ENCODE measurements at regions of chr5 and their contacts with region 1.

Region 1: GRCh38 chr5:156201788-156202403 is 125.1 kb upstream of the SGCD start:
- DNase-seq: no peak
- H3K4me3 ChIP-seq: no peak overlapping the region
- H3K27ac ChIP-seq: no peak overlapping the region
- H3K4me1 ChIP-seq: no peaks in the 10 kb centered on the region
- H3K27me3 ChIP-seq: no peaks in the 10 kb centered on the region
- CTCF ChIP-seq: no peak
- EP300 ChIP-seq: no peak
- POLR2A ChIP-seq: no peak

Region 2: DNA sequence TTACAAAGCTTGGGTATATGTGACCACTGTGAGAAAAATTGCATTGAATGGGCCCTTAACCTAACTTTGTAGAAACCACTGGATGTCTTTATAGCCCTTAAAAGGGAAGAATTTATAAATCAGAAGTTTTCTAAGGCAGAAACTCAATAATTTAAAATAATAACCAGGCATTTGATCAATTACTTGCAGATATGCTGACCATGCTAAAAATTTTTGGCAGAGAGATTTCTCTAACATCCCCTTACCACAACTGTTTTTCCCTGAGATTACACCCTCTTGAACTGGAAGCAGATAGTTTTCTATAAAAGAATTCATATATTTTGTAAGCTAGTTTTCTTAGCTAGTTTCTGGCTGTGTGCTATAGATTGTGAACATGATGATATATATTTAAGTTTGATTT is 760.0 kb before region 1 on chr5:
- intact Hi-C with region 1: loop called in 1 of 4 experiments (anchors 10 kb)
- DNase-seq: no peak
- H3K4me3 ChIP-seq: no peak overlapping the region
- H3K27ac ChIP-seq: no peak overlapping the region
- H3K4me1 ChIP-seq: no peaks in the 10 kb centered on the region
- H3K27me3 ChIP-seq: no peaks in the 10 kb centered on the region
- CTCF ChIP-seq: no peak
- EP300 ChIP-seq: no peak
- POLR2A ChIP-seq: no peak

Region 3: DNA sequence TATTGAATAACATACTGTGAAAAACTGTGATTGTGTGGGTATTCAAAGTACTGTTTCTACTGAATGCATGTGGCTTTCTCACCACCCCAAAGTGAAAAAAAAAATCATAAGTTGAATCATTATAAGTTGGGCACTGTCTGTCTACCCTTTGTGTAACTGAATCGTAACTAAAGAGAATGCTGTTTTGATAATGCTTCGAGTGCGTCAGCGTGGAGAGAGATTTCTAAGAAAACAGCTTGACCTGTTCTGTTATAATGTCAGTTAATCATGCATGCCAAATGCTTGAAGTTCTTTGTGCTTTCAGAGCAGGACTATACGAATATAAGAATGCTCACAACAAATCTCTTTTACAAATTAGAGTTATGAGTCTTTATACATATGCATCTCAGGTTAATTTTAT is 23.8 kb before region 1 on chr5:
- intact Hi-C with region 1: no loop called
- DNase-seq: no peak
- H3K4me3 ChIP-seq: no peak overlapping the region
- H3K27ac ChIP-seq: no peak overlapping the region
- H3K4me1 ChIP-seq: no peaks in the 10 kb centered on the region
- H3K27me3 ChIP-seq: no peaks in the 10 kb centered on the region
- CTCF ChIP-seq: no peak
- EP300 ChIP-seq: no peak
- POLR2A ChIP-seq: no peak

Measured in ovary (tissue), 10 donors.